Sciatic nerve (tissue), 2 donors: ENCODE measurements at regions of chr14 and their contacts with region 1.

Region 1: DNA sequence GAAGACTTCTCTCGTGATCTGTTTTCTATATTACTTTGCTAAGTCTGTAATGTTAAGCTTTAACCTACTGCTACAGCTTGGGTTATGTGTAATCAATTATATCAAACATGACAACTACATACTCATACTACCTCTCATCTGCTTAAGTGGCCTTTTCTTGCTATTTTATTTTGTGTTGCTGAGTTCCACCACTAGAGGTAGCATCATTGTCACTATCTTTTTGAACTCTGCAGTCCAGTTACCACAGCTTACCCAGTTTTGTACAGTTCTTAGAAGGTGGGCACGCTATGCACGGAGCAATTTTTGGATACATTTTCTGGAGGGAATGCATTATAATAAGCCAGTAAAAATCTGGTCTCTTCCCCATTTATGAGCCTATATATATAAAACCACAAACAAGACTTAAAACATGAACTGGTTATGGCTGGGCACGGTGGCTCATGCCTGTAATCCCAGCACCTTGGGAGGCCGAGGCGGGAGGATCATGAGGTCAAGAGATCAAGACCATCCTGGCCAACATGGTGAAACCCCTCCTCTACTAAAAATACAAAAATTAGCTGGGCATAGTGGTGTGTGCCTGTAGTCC is 48.5 kb downstream of the SAV1 start:
- DNase-seq: no peak
- ATAC-seq: peak; percentile 56

Region 2: DNA sequence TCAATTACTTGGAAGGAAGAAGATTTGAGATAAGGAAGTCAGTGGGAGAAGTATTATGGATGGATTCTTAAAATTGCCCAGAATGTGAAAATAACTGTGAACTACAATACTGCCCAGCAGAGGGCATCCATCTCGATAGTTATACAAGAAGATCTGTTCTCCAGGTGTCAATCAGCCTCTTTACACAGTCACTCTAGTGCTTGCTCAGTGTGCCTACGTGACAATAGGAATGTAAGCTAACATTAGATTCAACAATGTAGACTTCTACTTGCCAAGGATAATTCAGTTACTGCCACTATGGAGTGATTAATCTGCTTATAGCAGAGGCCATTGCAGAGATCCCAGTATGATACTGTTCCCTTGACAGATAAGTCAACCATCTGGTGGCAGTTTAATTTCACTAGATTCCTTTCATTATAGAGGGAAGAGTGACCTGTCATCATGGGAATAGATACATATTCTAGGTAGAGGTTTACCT is 76.7 kb before region 1 on chr14:
- intact Hi-C with region 1: loop called (anchors 10 kb)
- DNase-seq: no peak
- ATAC-seq: peak; percentile 51

Region 3: GRCh38 chr14:50773632-50774541 is 154.2 kb after region 1 on chr14:
- intact Hi-C with region 1: loop called (anchors 10 kb)
- DNase-seq: peak; percentile 76
- ATAC-seq: peak; percentile 74